ENCODE measurements at regions of chr9 and their contacts with region 1.

Region 1: DNA sequence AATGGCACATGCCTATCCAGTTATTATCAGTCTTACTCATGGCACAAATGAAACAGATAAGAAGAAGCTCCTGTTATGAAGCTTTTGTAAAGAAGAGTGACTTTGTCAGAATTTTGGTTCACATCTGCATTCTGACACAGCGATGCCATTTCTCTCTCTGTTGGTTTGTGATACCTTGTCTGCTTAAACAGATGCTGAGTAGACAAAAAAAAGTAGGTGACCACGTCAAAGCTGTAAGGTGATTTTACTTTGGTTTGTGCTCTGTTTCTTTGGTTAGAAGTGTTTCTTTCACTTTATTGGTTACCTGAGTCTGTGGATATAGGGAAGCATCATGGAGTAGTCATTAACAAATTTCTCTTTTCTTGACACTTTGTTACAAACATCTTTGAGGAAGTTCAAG is 422.3 kb upstream of the ADAMTSL1 start:
- DNase-seq: no peak
- H3K4me3 ChIP-seq: no peak overlapping the region
- H3K27ac ChIP-seq: no peak overlapping the region
- H3K4me1 ChIP-seq: no peaks in the 10 kb centered on the region
- H3K27me3 ChIP-seq: peaks cover 0 to 2% of the 10 kb centered on the region in 2 experiments
- CTCF ChIP-seq: no peak
- POLR2A ChIP-seq: no peak

Region 2: DNA sequence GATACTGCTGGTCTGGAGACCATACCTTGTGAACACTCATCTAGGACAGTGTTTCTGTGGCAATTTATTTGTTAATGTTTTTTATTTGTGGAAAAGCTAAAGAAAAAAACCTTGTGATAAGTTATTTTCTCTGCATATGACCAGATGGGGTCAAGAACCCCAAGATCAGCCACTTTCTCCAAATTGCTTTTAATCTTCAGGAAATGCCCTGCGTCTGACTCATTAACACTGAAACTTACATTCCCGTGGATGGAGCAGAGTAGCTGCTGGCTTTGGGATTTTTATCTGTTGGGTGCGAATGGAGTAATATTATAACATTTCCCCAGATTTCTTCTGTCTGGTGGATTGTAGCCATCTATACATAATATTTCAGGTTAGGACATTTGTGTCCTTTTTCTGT is 28.3 kb before region 1 on chr9:
- CTCF ChIA-PET with region 1: no interaction called
- POLR2A ChIA-PET with region 1: no interaction called
- dilution Hi-C with region 1: no loop called
- intact Hi-C with region 1: no loop called
- DNase-seq: peak; percentile 39
- H3K4me3 ChIP-seq: no peak overlapping the region
- H3K27ac ChIP-seq: no peak overlapping the region
- H3K4me1 ChIP-seq: peaks cover 5% of the 10 kb centered on the region
- H3K27me3 ChIP-seq: peaks cover 0 to 3% of the 10 kb centered on the region in 2 experiments
- CTCF ChIP-seq: no peak
- POLR2A ChIP-seq: no peak

Region 3: GRCh38 chr9:18071651-18072060 is 20.0 kb after region 1 on chr9:
- CTCF ChIA-PET with region 1: no interaction called
- POLR2A ChIA-PET with region 1: no interaction called
- dilution Hi-C with region 1: no loop called
- intact Hi-C with region 1: no loop called
- DNase-seq: no peak
- H3K4me3 ChIP-seq: no peak overlapping the region
- H3K27ac ChIP-seq: no peak overlapping the region
- H3K4me1 ChIP-seq: no peaks in the 10 kb centered on the region
- H3K27me3 ChIP-seq: no peaks in the 10 kb centered on the region
- CTCF ChIP-seq: no peak
- POLR2A ChIP-seq: no peak

Region 4: DNA sequence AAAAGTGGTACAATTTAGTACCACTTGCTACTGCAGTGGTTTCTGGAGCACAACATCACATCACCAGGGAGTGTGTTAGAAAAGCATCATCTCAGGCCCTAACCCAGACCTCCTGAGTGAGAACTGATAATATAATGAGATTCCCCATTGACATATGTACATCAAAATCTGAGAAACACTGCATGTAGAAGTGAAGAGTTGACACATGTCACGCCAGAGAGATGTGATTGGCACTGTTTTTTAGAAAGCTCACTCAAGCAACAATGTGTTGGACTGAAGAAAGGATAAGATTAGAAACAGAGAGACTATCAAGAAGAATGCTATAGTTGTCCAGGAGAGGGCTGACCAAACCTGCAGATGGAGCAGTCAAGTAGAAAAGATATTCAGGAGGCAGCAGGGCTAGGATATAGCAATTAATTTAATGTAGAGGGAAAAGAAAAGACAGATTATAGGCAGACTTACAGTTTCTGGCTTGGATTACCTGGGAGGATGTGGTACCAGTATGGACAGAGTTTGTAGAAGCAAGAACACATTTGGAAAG is 97.9 kb after region 1 on chr9:
- CTCF ChIA-PET with region 1: no interaction called
- POLR2A ChIA-PET with region 1: interaction called, 10 read pairs
- dilution Hi-C with region 1: no loop called
- intact Hi-C with region 1: no loop called
- DNase-seq: peak; percentile 4
- H3K4me3 ChIP-seq: no peak overlapping the region
- H3K27ac ChIP-seq: no peak overlapping the region
- H3K4me1 ChIP-seq: no peaks in the 10 kb centered on the region
- H3K27me3 ChIP-seq: peaks cover 7 to 8% of the 10 kb centered on the region in 2 experiments
- CTCF ChIP-seq: no peak
- POLR2A ChIP-seq: no peak

Region 5: DNA sequence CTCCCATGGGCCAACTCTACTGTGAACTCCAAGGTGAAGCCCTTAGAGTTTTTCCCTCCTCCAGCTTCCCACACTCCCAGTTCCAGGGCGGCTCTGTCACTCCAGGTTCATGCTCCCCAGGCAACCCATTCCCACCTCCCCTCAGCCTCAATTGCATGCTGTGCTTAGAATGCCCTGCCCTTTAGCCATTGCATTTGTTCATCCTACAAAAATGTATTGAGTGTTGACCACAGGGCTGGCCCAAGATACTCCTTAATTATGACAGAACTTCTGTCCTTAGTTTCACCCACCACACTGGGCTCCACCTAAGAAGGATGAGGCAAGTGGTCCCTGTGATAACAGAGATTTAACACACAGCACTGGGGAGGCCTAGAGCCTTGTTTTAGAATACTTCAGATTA is 658.4 kb after region 1 on chr9:
- CTCF ChIA-PET with region 1: no interaction called
- POLR2A ChIA-PET with region 1: no interaction called
- dilution Hi-C with region 1: no loop called
- intact Hi-C with region 1: no loop called
- DNase-seq: no peak
- H3K4me3 ChIP-seq: no peak overlapping the region
- H3K27ac ChIP-seq: no peak overlapping the region
- H3K4me1 ChIP-seq: no peaks in the 10 kb centered on the region
- H3K27me3 ChIP-seq: no peaks in the 10 kb centered on the region
- CTCF ChIP-seq: no peak
- POLR2A ChIP-seq: no peak